ENCODE measurements at regions of chr1 and their contacts with region 1.

Region 1: GRCh38 chr1:88877382-88877825 is 14.0 kb downstream of the GTF2B start:
- DNase-seq: no peak
- ATAC-seq: peak; percentile 61
- H3K4me3 ChIP-seq: no peak overlapping the region
- H3K27ac ChIP-seq: no peak overlapping the region
- H3K4me1 ChIP-seq: no peaks in the 10 kb centered on the region
- H3K27me3 ChIP-seq: no peaks in the 10 kb centered on the region

Region 2: GRCh38 chr1:88655685-88656299 is 221.6 kb before region 1 on chr1:
- intact Hi-C with region 1: loop called (anchors 5 to 10 kb)
- DNase-seq: no peak
- ATAC-seq: no peak
- H3K4me3 ChIP-seq: no peak overlapping the region
- H3K27ac ChIP-seq: no peak overlapping the region
- H3K4me1 ChIP-seq: no peaks in the 10 kb centered on the region
- H3K27me3 ChIP-seq: no peaks in the 10 kb centered on the region

Region 3: DNA sequence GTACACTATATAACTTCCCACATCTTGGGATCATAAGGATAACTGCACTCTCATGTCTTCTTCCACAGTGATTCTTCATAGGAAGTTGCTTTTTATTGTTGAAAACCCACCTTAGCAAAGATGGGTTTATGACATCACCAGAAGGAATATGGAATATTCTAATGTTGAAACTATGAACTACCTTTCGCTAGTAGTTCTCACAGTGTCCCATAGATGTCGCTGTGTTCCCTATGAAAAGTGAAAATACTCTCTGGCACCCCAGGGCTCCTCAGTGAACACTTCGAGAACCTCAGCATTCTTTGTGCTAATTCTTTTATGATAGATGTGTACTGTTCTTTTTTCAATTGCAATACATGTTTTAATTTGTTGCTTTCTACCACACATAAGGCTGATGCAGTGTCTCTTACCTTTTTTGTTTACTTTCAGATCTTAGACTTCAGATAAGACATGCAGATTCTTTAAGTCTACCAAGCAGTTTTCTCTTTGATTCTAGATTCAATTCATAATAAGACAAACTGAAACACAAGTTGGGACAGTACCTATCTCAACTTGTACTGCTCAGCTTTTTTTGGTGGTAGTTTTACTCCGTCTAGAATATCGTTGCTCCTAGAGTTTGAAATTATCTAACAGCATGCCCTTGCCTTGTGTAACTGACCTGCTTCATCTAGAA is 76.9 kb before region 1 on chr1:
- intact Hi-C with region 1: loop called in 1 of 2 experiments (anchors 10 kb)
- DNase-seq: no peak
- ATAC-seq: no peak
- H3K4me3 ChIP-seq: no peak overlapping the region
- H3K27ac ChIP-seq: no peak overlapping the region
- H3K4me1 ChIP-seq: no peaks in the 10 kb centered on the region
- H3K27me3 ChIP-seq: no peaks in the 10 kb centered on the region